ENCODE measurements at regions of chr5 and their contacts with region 1.

Region 1: DNA sequence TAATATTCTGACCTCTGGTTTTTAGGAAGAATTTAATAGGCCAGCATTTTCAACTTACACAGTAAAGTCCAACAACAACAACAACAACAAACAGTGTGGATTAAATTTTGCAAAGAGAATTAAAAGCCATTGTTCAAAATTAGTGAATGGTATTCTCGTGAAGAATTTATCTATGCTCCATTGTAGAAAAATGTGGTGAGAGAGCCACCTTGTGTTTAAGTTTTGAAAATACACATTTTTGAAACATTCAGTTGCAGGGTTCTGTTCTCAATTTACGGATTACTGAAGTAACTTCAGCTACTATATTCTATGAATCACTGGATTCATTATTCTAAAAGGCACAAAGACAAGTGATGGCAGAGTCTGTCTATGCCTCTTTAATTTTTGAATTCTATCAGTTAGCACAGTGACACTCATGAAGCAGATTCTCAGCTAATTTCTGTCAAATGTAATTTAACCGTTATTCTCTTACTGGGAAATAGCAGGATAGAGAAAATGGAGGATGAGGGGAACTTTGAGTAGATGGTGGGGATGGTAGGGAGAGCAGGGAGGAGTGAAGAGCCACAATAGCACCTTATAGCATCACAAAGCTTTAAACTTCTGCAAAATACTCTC is 11.0 kb downstream of the CCDC152 start:
- DNase-seq: peak in 1 of 2 experiments; percentile 31
- H3K4me3 ChIP-seq: no peak overlapping the region
- H3K4me3 Mint-ChIP-seq: peak overlapping the region; percentile 53
- H3K27ac Mint-ChIP-seq: no peak overlapping the region
- H3K4me1 ChIP-seq: peaks cover 12% of the 10 kb centered on the region
- H3K4me1 Mint-ChIP-seq: peaks cover 16% of the 10 kb centered on the region
- H3K27me3 ChIP-seq: no peaks in the 10 kb centered on the region
- H3K27me3 Mint-ChIP-seq: no peaks in the 10 kb centered on the region
- CTCF ChIP-seq: peak; percentile 24 to 63

Region 2: GRCh38 chr5:41856644-41857491 is 910.7 kb before region 1 on chr5:
- CTCF ChIA-PET with region 1: no interaction called
- POLR2A ChIA-PET with region 1: no interaction called
- intact Hi-C with region 1: loop called (anchors 1 kb)
- DNase-seq: peak; percentile 54 to 72
- H3K4me3 ChIP-seq: no peak overlapping the region
- H3K4me3 Mint-ChIP-seq: no peak overlapping the region
- H3K27ac Mint-ChIP-seq: no peak overlapping the region
- H3K4me1 ChIP-seq: no peaks in the 10 kb centered on the region
- H3K4me1 Mint-ChIP-seq: no peaks in the 10 kb centered on the region
- H3K27me3 ChIP-seq: no peaks in the 10 kb centered on the region
- H3K27me3 Mint-ChIP-seq: no peaks in the 10 kb centered on the region
- CTCF ChIP-seq: peak; percentile 71 to 80

Region 3: GRCh38 chr5:42228279-42228678 is 539.3 kb before region 1 on chr5:
- CTCF ChIA-PET with region 1: no interaction called
- POLR2A ChIA-PET with region 1: no interaction called
- intact Hi-C with region 1: loop called (anchors 5 kb)
- DNase-seq: no peak
- H3K4me3 ChIP-seq: no peak overlapping the region
- H3K4me3 Mint-ChIP-seq: no peak overlapping the region
- H3K27ac Mint-ChIP-seq: no peak overlapping the region
- H3K4me1 ChIP-seq: no peaks in the 10 kb centered on the region
- H3K4me1 Mint-ChIP-seq: no peaks in the 10 kb centered on the region
- H3K27me3 ChIP-seq: no peaks in the 10 kb centered on the region
- H3K27me3 Mint-ChIP-seq: no peaks in the 10 kb centered on the region
- CTCF ChIP-seq: no peak

Region 4: DNA sequence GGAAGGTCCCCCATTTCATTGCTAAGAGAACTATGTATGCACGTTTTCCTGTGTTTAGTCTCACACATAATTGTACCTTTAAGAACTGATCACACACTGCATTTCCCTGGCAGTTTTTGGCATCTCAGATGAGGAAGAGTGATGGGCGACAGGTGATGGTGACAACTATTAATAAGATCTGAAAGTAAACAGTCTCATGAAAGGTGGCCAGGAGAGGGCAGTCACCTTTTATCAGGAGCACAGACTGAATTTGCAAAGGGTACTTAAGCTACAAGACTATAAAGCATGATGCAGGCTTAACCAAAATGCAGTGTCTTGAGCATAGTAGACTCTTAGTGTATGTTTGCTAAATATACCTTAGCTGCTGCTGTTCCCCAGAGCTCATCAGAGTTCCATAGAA is 252.8 kb before region 1 on chr5:
- CTCF ChIA-PET with region 1: interaction called, 8 read pairs
- POLR2A ChIA-PET with region 1: no interaction called
- intact Hi-C with region 1: loop called (anchors 1 kb)
- DNase-seq: peak in 1 of 2 experiments; percentile 19
- H3K4me3 ChIP-seq: no peak overlapping the region
- H3K4me3 Mint-ChIP-seq: no peak overlapping the region
- H3K27ac Mint-ChIP-seq: no peak overlapping the region
- H3K4me1 ChIP-seq: peaks cover 20% of the 10 kb centered on the region; the same call in 1 of the 2 replicates
- H3K4me1 Mint-ChIP-seq: peaks cover 8% of the 10 kb centered on the region
- H3K27me3 ChIP-seq: no peaks in the 10 kb centered on the region
- H3K27me3 Mint-ChIP-seq: no peaks in the 10 kb centered on the region
- CTCF ChIP-seq: peak; percentile 16 to 33

Region 5: DNA sequence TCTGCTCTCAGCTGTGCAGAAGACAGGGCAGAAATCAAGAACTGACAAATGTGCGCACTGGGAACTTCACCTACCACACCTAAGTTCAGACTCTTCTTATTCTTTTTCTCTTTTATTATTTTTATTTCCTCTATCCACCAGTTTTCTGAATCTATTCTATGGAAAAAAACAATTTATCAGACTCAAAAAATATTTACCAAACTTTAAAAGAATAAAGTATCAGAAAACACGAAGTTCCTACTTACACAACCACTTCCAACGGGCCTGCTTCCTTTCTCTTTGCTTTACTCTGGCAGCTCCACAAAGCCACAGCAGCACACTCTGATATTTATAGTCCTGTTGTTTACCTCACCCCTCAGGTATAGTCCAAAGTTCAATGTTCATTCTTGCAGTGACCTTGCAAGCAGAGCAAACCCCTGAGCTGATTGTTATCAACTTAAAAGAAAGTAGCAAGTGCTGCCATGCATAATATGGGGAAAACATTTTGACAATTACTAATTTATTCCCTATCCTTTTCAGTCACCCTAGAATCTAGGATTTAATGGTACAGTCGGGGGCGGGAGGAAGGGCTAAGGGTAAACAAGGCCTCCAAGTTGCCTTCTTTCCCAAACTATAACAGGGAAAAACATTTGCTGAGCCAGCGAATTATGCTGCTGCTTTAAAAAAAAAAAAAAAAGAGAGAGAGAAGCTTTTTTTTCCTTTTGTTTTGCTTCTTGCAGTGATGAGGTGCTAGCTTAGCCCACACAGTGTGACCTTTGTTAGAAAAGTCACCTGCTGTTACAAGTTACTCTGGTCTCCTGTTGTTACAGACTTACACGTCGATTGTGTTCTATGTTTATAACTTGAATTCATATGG is 44.2 kb after region 1 on chr5 and contains the start of gene SELENOP:
- CTCF ChIA-PET with region 1: no interaction called
- POLR2A ChIA-PET with region 1: no interaction called
- intact Hi-C with region 1: loop called (anchors 5 kb)
- DNase-seq: peak; percentile 76 to 83
- H3K4me3 ChIP-seq: peak within 1 kb of the TSS; percentile 45
- H3K4me3 Mint-ChIP-seq: peak within 1 kb of the TSS; percentile 75
- H3K27ac Mint-ChIP-seq: peak within 1 kb of the TSS; percentile 82
- H3K4me1 ChIP-seq: peaks cover 25% of the 10 kb centered on the region
- H3K4me1 Mint-ChIP-seq: peaks cover 30% of the 10 kb centered on the region
- H3K27me3 ChIP-seq: no peaks in the 10 kb centered on the region
- H3K27me3 Mint-ChIP-seq: no peaks in the 10 kb centered on the region
- CTCF ChIP-seq: no peak
- total RNA-seq, gene SELENOP: 114 and 153 TPM in 2 replicates